ENCODE measurements at regions of chrX and their contacts with region 1.

Region 1: GRCh38 chrX:25442499-25442898 is 426.7 kb upstream of the ARX start:
- DNase-seq: peak; percentile 35
- H3K4me3 ChIP-seq: no peak overlapping the region
- H3K27ac ChIP-seq: no peak overlapping the region
- H3K4me1 ChIP-seq: no peaks in the 10 kb centered on the region
- H3K27me3 ChIP-seq: peaks cover 30% of the 10 kb centered on the region
- CTCF ChIP-seq: peak; percentile 57

Region 2: DNA sequence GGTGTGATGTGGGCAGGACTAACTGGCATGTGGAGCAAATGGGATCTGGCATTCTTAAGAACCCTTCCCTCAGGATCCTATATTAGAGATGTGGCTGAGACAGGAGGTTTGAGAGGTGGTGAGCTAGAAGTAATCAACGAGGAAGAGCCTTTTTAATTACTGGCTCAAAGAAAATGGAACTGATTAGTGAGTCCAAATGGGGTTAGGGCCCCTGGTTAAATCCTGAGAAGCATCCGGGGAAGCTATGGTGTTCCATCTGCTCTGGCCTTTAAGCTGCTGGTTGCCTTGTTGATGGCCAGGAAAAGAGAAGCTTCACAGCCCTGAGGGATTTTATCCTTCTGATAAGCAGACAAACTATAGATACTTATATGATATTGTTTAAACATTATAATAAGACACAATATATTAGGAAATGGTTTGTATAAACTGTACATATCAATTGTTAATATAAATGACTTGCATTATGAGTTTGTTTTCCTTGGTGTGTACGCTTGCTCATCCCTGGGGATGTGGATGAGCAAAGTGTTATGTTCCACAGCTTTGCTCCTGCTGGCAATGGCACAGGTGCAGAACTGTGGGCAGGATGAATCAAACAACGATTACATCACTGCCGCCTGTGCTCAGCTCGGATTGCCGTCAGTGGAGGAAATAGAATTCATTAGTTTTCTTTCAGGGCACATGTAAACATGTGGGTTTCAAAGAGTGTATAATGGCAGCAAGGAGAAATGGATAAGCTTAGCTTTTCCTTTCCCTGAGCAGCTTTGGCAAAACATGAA is 98.2 kb before region 1 on chrX:
- CTCF ChIA-PET with region 1: no interaction called
- POLR2A ChIA-PET with region 1: no interaction called
- intact Hi-C with region 1: loop called (anchors 5 kb)
- DNase-seq: no peak
- H3K4me3 ChIP-seq: no peak overlapping the region
- H3K27ac ChIP-seq: no peak overlapping the region
- H3K4me1 ChIP-seq: no peaks in the 10 kb centered on the region
- H3K27me3 ChIP-seq: peaks cover 4% of the 10 kb centered on the region
- CTCF ChIP-seq: no peak

Measured in A673 (cell line).